ENCODE measurements at regions of chr6 and their contacts with region 1.

Region 1: DNA sequence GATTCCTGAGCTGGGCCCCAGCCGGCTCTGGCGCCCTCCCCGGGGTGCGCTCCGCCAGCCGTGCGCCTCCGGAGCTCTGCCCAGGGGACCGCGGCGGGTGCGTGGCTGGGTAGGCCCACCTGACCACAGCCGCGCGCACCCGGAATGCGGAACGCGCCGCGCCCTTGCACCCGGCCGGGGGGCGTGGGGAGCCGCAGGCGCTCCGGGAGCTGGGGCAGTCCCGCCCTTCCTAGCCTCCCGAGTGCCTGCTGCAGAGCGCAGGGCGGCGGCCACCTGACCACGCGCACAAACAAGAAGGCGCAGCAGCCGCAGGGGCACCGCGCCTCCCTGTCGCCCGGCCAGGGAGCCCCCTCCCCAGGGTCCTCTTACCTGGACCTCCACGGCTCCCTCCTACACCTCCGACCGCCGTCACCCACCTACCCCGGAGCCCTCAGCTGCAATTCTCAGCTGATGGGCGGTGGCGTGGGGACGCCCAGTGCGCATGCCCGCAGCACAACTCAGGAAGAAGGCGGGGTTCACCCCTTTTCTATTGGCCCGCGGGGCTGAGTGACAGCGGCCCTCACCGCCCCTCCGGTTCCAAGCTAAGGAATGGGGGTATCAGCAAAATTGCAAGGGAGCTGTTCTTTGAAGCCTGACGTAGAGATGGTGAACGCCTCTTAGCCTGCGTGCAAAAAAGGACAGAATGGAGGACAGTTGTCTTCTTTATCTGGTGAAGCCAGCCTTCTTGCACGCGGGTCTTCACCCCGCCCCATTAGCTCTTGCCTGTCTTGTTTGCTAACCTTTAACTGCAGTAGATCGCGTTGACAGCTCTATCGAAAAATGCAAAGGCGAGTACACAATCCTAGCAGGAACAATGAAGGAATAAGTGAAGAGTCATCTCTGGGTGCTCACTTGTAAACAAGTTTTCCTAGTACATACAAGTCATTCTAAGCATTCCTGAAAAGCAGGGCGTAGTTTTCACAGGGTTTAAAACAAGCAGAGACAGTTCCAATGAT is at the start of gene STX7:
- DNase-seq: peak; percentile 90 to 97
- H3K4me3 ChIP-seq: peak within 1 kb of the TSS; percentile 71
- H3K27ac ChIP-seq: peak within 1 kb of the TSS; percentile 63
- H3K4me1 ChIP-seq: peaks cover 28% of the 10 kb centered on the region
- H3K27me3 ChIP-seq: no peaks in the 10 kb centered on the region
- CTCF ChIP-seq: no peak
- total RNA-seq, gene STX7: 33.3 and 40.7 TPM in 2 replicates

Region 2: DNA sequence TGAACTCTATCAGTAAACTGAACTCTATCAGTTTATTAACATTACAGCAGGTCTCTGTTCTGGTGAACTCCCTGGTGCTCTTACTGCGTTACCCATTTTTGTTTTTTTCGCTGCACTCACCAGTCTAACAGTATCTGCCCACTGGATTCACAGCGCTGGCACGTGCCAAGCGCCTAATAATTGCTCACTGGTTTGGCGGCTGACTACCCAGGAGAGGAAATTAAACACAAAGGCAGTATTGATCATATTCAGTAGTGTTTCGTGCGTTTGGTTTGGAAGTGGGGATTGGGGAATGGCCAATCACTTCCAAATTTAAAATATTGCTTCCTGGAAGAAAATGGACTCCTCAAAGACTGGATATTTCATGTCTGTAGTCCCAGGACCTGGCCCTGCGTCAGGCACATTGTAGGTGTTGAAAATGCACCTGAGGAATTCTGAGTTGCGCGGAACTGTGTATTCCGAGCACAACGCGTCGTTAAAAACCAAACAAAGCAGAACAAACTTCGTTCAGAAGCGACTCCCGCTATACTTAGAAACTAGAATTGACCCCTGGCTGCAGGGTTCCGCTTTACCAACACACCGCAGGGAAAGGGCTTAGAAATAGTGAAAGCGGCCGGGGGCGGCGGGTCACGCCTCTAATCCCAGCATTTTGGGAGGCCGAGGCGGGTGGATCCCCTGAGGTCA is 300.4 kb after region 1 on chr6:
- CTCF ChIA-PET with region 1: no interaction called
- POLR2A ChIA-PET with region 1: no interaction called
- intact Hi-C with region 1: loop called (anchors 2 kb)
- DNase-seq: peak in 1 of 2 experiments; percentile 59
- H3K4me3 ChIP-seq: peak overlapping the region; percentile 84
- H3K27ac ChIP-seq: peak overlapping the region; percentile 89
- H3K4me1 ChIP-seq: peaks cover 36% of the 10 kb centered on the region
- H3K27me3 ChIP-seq: no peaks in the 10 kb centered on the region
- CTCF ChIP-seq: no peak

Measured in PC-9 (cell line).